Heart left ventricle (tissue), 16 donors: ENCODE measurements at regions of chr7 and their contacts with region 1.

Region 1: GRCh38 chr7:130010689-130011412 is 40.3 kb downstream of the ZC3HC1 start:
- DNase-seq: peak in 4 of 5 donors; percentile 61 to 82 (median 70)
- ATAC-seq: peak; percentile 49 to 66 (median 58)
- H3K4me3 ChIP-seq: no peak overlapping the region
- H3K27ac ChIP-seq: peak overlapping the region in 5 of 12 donors; percentile 34 to 55 (median 41)
- H3K4me1 ChIP-seq: peaks cover 0 to 23% (median 5%) of the 10 kb centered on the region in 12 donors
- H3K27me3 ChIP-seq: no peaks in the 10 kb centered on the region
- CTCF ChIP-seq: peak; percentile 86 to 95 (median 92)
- POLR2A ChIP-seq: no peak

Region 2: DNA sequence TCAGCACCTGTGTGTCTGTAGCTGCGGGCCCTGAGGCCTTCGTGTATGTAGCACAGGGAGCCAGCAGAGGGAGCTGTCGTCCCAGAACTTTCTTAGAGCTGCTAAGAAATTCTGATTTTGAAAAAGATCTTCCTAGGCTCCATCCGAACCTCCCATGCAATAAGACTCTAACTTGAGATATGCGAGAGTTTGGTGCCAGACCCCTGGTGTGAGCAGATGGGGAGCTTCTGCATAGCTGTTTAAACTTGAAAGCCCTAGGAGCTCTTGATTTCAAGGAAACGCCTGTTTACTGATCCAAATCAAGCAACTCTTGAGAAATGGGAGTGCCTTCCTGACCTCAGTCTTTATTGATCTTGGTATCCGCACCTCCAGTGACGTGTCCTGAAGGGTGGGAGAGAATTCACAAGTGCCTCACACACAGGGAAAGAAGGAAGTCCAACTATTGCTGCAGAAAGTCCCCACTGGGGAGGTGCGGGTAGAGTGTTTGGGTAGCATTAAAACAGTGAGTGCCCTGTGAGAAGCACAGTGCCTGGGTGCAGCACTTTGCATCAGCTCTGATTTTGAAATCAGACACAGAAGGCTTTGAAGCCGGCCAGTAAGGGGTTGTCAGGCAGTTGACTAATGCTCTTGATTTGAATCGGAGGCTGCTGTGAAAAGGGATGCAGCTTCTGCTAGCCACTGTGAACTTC is 643.0 kb before region 1 on chr7:
- intact Hi-C with region 1: loop called in 3 of 10 experiments (anchors 10 kb)
- DNase-seq: peak; percentile 54 to 78 (median 73)
- ATAC-seq: peak; percentile 62 to 88 (median 88)
- H3K4me3 ChIP-seq: peak overlapping the region in 6 of 12 donors; percentile 6 to 25 (median 18)
- H3K27ac ChIP-seq: no peak overlapping the region
- H3K4me1 ChIP-seq: peaks cover 0 to 14% (median 5%) of the 10 kb centered on the region in 12 donors
- H3K27me3 ChIP-seq: no peaks in the 10 kb centered on the region
- CTCF ChIP-seq: peak; percentile 78 to 94 (median 86)
- POLR2A ChIP-seq: no peak

Region 3: GRCh38 chr7:129462420-129462819 is 548.4 kb before region 1 on chr7:
- intact Hi-C with region 1: no loop called
- DNase-seq: no peak
- ATAC-seq: no peak
- H3K4me3 ChIP-seq: no peak overlapping the region
- H3K27ac ChIP-seq: no peak overlapping the region
- H3K4me1 ChIP-seq: peaks cover 0 to 3% (median 0%) of the 10 kb centered on the region in 12 donors
- H3K27me3 ChIP-seq: no peaks in the 10 kb centered on the region
- CTCF ChIP-seq: no peak
- POLR2A ChIP-seq: no peak

Region 4: GRCh38 chr7:129502376-129502776 is 508.5 kb before region 1 on chr7 and contains the start of gene SMKR1:
- intact Hi-C with region 1: loop called in 1 of 10 experiments (anchors 10 kb)
- DNase-seq: peak; percentile 51 to 92 (median 62)
- ATAC-seq: peak; percentile 64 to 91 (median 90)
- H3K4me3 ChIP-seq: peak within 1 kb of the TSS; percentile 33 to 69 (median 54)
- H3K27ac ChIP-seq: no peak within 1 kb of the TSS
- H3K4me1 ChIP-seq: peaks cover 0 to 16% (median 7%) of the 10 kb centered on the region in 12 donors
- H3K27me3 ChIP-seq: peaks cover 0 to 17% (median 0%) of the 10 kb centered on the region in 9 donors
- CTCF ChIP-seq: no peak
- POLR2A ChIP-seq: no peak
- total RNA-seq, gene SMKR1: 0.25 TPM in 1 of 9 donors, not detected in the others

Region 5: DNA sequence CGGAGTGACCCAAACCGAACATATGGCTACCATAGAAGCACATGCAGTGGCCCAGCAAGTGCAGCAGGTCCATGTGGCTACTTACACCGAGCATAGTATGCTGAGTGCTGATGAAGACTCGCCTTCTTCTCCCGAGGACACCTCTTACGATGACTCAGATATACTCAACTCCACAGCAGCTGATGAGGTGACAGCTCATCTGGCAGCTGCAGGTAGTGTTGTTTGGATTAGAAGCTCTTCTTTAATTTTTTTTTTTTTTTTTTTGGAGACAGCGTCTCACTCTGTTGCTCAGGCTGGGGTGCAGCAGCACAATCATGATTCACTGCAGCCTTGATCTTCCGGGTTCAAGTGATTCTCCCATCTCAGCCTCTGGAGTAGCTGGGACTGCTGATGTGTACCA is 353.5 kb before region 1 on chr7:
- intact Hi-C with region 1: loop called in 5 of 10 experiments (anchors 5 to 10 kb)
- DNase-seq: no peak
- ATAC-seq: no peak
- H3K4me3 ChIP-seq: no peak overlapping the region
- H3K27ac ChIP-seq: no peak overlapping the region
- H3K4me1 ChIP-seq: peaks cover 0 to 9% (median 0%) of the 10 kb centered on the region in 12 donors
- H3K27me3 ChIP-seq: no peaks in the 10 kb centered on the region
- CTCF ChIP-seq: no peak
- POLR2A ChIP-seq: no peak

Region 6: DNA sequence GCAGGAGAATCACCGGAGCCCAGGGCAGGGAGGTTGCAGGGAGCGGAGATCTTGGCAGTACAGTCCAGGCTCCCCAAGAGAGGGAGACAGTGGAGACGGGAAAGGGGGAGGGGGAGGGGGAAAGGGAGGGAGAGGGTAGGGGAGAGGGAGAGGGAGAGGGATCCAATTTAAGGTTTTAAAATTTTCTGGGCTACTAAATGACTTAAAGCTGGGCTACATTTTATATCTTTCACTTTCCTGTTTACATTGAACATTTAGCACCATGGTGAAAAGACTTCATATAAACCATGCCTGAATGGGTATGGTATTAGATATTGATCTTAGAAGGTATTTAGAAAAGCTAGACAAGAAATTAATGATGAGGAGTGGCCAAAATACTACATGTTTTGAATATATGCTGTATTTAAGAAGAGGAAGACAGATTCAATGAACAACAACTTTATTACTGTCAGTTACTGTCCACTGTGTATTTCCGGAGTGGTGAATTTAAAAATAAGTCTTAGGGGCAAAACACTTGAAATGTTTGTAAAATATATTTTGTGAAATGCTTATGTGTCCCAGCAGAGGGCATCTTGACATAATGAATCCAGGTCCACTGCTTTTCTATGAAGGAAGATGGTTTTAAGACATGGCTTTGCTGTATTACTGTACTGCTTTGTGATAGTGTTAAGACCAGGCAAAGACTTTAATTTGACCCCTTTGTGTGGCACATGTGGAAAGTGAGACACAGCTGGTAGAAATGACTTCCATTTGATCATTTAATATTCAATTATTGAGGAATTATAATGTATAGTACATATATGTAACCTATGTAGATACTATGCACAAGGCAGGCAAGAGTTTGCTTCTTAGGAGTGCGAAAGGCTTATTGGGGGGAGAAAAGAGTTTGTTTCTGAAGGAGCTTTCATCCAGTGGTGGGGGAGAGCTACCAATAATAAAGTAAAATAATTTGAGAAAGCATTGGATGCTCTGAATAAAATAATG is 346.5 kb before region 1 on chr7:
- intact Hi-C with region 1: loop called in 9 of 10 experiments (anchors 2 to 10 kb)
- DNase-seq: no peak
- ATAC-seq: peak in 2 of 4 donors; percentile 36 to 45
- H3K4me3 ChIP-seq: no peak overlapping the region
- H3K27ac ChIP-seq: no peak overlapping the region
- H3K4me1 ChIP-seq: peaks cover 0 to 6% (median 0%) of the 10 kb centered on the region in 12 donors
- H3K27me3 ChIP-seq: no peaks in the 10 kb centered on the region
- CTCF ChIP-seq: peak in 11 of 12 donors; percentile 16 to 58 (median 46)
- POLR2A ChIP-seq: no peak

Region 7: GRCh38 chr7:129670656-129671055 is 340.2 kb before region 1 on chr7:
- intact Hi-C with region 1: loop called in 8 of 10 experiments (anchors 2 to 10 kb)
- DNase-seq: no peak
- ATAC-seq: no peak
- H3K4me3 ChIP-seq: no peak overlapping the region
- H3K27ac ChIP-seq: no peak overlapping the region
- H3K4me1 ChIP-seq: peaks cover 0 to 9% (median 0%) of the 10 kb centered on the region in 12 donors
- H3K27me3 ChIP-seq: no peaks in the 10 kb centered on the region
- CTCF ChIP-seq: no peak
- POLR2A ChIP-seq: no peak

Region 8: GRCh38 chr7:129952653-129953560 is 57.9 kb before region 1 on chr7 and contains the start of gene UBE2H:
- intact Hi-C with region 1: no loop called
- DNase-seq: peak; percentile 91 to 97 (median 92)
- ATAC-seq: peak; percentile 83 to 93 (median 86)
- H3K4me3 ChIP-seq: peak within 1 kb of the TSS; percentile 61 to 99 (median 87)
- H3K27ac ChIP-seq: peak within 1 kb of the TSS; percentile 93 to 99 (median 96)
- H3K4me1 ChIP-seq: peaks cover 7 to 39% (median 21%) of the 10 kb centered on the region in 12 donors
- H3K27me3 ChIP-seq: no peaks in the 10 kb centered on the region
- CTCF ChIP-seq: no peak
- POLR2A ChIP-seq: peak; percentile 98 to 99
- total RNA-seq, gene UBE2H: 92.8 to 219 (median 130) TPM

Region 9: GRCh38 chr7:130063036-130063435 is 52.2 kb after region 1 on chr7:
- intact Hi-C with region 1: no loop called
- DNase-seq: peak in 2 of 5 donors; percentile 15 to 27
- ATAC-seq: no peak
- H3K4me3 ChIP-seq: no peak overlapping the region
- H3K27ac ChIP-seq: no peak overlapping the region
- H3K4me1 ChIP-seq: peaks cover 0 to 8% (median 0%) of the 10 kb centered on the region in 12 donors
- H3K27me3 ChIP-seq: no peaks in the 10 kb centered on the region
- CTCF ChIP-seq: peak; percentile 37 to 77 (median 60)
- POLR2A ChIP-seq: no peak

Region 10: DNA sequence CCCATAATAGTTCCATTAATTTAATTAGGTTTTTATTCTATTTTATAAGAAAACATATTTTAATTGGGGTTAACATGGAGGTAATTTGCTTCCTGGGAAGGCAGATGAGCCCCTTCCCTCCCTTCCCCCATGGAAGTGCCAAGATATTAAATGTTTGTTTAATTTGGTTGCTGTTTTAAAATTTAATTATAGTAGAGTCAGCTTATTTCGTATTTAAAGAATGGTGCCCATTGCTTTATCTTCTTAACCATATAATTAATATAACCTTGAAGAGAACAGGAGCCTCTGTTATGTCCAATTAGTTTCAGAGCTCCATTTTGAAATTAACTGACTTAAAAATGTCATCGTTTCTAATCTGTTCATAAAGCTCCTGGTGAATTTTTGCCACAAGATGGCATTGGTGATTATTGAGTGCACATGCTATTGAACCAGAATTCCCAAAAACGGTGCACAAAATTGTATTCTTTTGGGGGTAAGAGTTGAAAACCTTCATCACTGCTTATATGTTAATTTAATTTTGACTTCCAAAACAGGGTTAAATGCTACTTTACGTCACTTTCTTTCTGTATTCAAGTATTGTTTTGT is 85.5 kb after region 1 on chr7:
- intact Hi-C with region 1: no loop called
- DNase-seq: no peak
- ATAC-seq: no peak
- H3K4me3 ChIP-seq: no peak overlapping the region
- H3K27ac ChIP-seq: no peak overlapping the region
- H3K4me1 ChIP-seq: peaks cover 0 to 12% (median 2%) of the 10 kb centered on the region in 12 donors
- H3K27me3 ChIP-seq: no peaks in the 10 kb centered on the region
- CTCF ChIP-seq: peak in 2 of 12 donors; percentile 13 to 18
- POLR2A ChIP-seq: no peak